HepG2 (cell line): ENCODE measurements at regions of chr12 and their contacts with region 1.

Region 1: DNA sequence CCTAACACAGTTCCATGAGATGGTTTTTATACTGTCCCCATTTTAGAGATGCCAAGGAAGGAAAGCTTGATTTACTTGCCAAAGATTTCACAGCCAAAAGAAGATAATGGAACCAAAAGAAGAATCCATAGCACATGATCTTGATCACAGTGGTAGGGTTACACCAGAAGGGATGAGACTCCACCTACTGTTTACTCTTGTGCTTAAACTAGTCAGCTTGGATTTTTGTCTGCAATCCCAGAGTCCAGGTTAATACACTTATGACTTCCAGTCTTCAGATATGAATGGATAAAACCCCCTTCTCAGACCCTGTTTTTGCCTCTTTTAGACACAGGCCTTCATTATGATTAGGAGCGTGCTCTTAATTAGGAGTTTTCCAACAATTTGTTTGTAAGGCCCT is 454.2 kb downstream of the AEBP2 start:
- DNase-seq: no peak
- ATAC-seq: peak; percentile 70; the same call in 2 of the 3 replicates
- H3K4me3 ChIP-seq: no peak overlapping the region
- H3K27ac ChIP-seq: no peak overlapping the region
- H3K4me1 ChIP-seq: no peaks in the 10 kb centered on the region
- H3K27me3 ChIP-seq: no peaks in the 10 kb centered on the region
- CTCF ChIP-seq: peak; percentile 41
- EP300 ChIP-seq: no peak
- POLR2A ChIP-seq: no peak
- RAD21 ChIP-seq: no peak

Region 2: GRCh38 chr12:19757317-19757877 is 136.1 kb before region 1 on chr12:
- CTCF ChIA-PET with region 1: no interaction called
- POLR2A ChIA-PET with region 1: no interaction called
- in situ Hi-C with region 1: no loop called
- intact Hi-C with region 1: loop called (anchors 10 kb)
- DNase-seq: no peak
- ATAC-seq: peak; percentile 49; the same call in 1 of the 3 replicates
- H3K4me3 ChIP-seq: no peak overlapping the region
- H3K27ac ChIP-seq: no peak overlapping the region
- H3K4me1 ChIP-seq: no peaks in the 10 kb centered on the region
- H3K27me3 ChIP-seq: no peaks in the 10 kb centered on the region
- CTCF ChIP-seq: peak; percentile 62
- EP300 ChIP-seq: no peak
- POLR2A ChIP-seq: no peak
- RAD21 ChIP-seq: no peak

Region 3: DNA sequence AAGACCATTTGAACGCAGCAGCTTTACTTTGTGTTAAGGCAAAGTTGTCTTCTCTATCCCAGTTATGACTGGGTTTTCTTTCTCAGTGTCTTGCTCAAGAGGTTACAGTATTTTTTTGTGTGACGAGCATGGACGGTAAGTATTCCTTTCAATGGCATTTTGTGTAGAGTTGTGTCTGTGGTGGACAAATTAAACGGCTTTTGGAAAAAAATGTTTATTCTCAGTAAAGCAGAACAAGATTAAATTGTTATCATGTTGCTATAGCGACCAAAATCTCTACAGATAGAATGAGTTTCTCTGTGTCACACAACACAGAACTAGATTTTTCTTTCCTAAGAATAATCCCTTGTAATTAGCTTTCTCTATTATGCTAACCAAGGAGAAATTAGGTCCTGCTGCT is 37.1 kb before region 1 on chr12:
- CTCF ChIA-PET with region 1: no interaction called
- POLR2A ChIA-PET with region 1: no interaction called
- in situ Hi-C with region 1: no loop called
- intact Hi-C with region 1: no loop called
- DNase-seq: no peak
- ATAC-seq: no peak
- H3K4me3 ChIP-seq: no peak overlapping the region
- H3K27ac ChIP-seq: no peak overlapping the region
- H3K4me1 ChIP-seq: no peaks in the 10 kb centered on the region
- H3K27me3 ChIP-seq: no peaks in the 10 kb centered on the region
- CTCF ChIP-seq: no peak
- EP300 ChIP-seq: no peak
- POLR2A ChIP-seq: no peak
- RAD21 ChIP-seq: no peak

Region 4: GRCh38 chr12:19912991-19913390 is 19.5 kb after region 1 on chr12:
- CTCF ChIA-PET with region 1: no interaction called
- POLR2A ChIA-PET with region 1: no interaction called
- in situ Hi-C with region 1: no loop called
- intact Hi-C with region 1: loop called (anchors 1 kb)
- DNase-seq: peak; percentile 52
- ATAC-seq: peak; percentile 94
- H3K4me3 ChIP-seq: no peak overlapping the region
- H3K27ac ChIP-seq: no peak overlapping the region
- H3K4me1 ChIP-seq: 0 out of 2 replicates have a peak, but pooled peaks cover 21% of the 10 kb centered on the region
- H3K27me3 ChIP-seq: no peaks in the 10 kb centered on the region
- CTCF ChIP-seq: no peak
- EP300 ChIP-seq: no peak
- POLR2A ChIP-seq: no peak
- RAD21 ChIP-seq: no peak